ENCODE measurements at regions of chr12 and their contacts with region 1.

Region 1: GRCh38 chr12:66169221-66170170 is at the start of gene TMBIM4:
- DNase-seq: peak; percentile 67 to 88 (median 80)
- H3K4me3 ChIP-seq: peak within 1 kb of the TSS; percentile 59 to 94 (median 82)
- H3K27ac ChIP-seq: peak within 1 kb of the TSS; percentile 93 to 100 (median 99)
- H3K27me3 ChIP-seq: no peaks in the 10 kb centered on the region
- CTCF ChIP-seq: peak; percentile 21 to 72 (median 56)
- total RNA-seq, gene TMBIM4: 18.9 to 70.3 (median 40.0) TPM

Region 2: GRCh38 chr12:66066137-66066928 is 103.2 kb before region 1 on chr12:
- intact Hi-C with region 1: no loop called
- DNase-seq: no peak
- H3K4me3 ChIP-seq: no peak overlapping the region
- H3K27ac ChIP-seq: no peak overlapping the region
- H3K27me3 ChIP-seq: peaks cover 0 to 31% (median 3%) of the 10 kb centered on the region in 45 donors
- CTCF ChIP-seq: no peak

Region 3: GRCh38 chr12:66129954-66130276 is 39.6 kb before region 1 on chr12:
- intact Hi-C with region 1: loop called in 1 of 2 experiments (anchors 2 kb)
- DNase-seq: no peak
- H3K4me3 ChIP-seq: peak overlapping the region; percentile 64 to 99 (median 87)
- H3K27ac ChIP-seq: peak overlapping the region in 4 of 59 donors; percentile 55 to 78 (median 70)
- H3K27me3 ChIP-seq: no peaks in the 10 kb centered on the region
- CTCF ChIP-seq: no peak

Region 4: GRCh38 chr12:66144791-66145754 is 24.4 kb before region 1 on chr12:
- intact Hi-C with region 1: no loop called
- DNase-seq: no peak
- H3K4me3 ChIP-seq: peak overlapping the region in 1 of 59 donors; percentile 19
- H3K27ac ChIP-seq: peak overlapping the region in 26 of 59 donors; percentile 1 to 70 (median 20)
- H3K27me3 ChIP-seq: no peaks in the 10 kb centered on the region
- CTCF ChIP-seq: peak in 55 of 56 donors; percentile 24 to 72 (median 50)

Region 5: GRCh38 chr12:66301944-66302826 is 132.7 kb after region 1 on chr12 and contains the start of gene HELB:
- intact Hi-C with region 1: loop called in 1 of 2 experiments (anchors 10 kb)
- DNase-seq: peak; percentile 37 to 97 (median 93)
- H3K4me3 ChIP-seq: peak within 1 kb of the TSS; percentile 53 to 91 (median 79)
- H3K27ac ChIP-seq: peak within 1 kb of the TSS in 50 of 59 donors; percentile 16 to 87 (median 64)
- H3K27me3 ChIP-seq: no peaks in the 10 kb centered on the region
- CTCF ChIP-seq: peak in 5 of 56 donors; percentile 2 to 24 (median 9)
- total RNA-seq, gene HELB: 1.2 to 14.2 (median 3.5) TPM

Region 6: DNA sequence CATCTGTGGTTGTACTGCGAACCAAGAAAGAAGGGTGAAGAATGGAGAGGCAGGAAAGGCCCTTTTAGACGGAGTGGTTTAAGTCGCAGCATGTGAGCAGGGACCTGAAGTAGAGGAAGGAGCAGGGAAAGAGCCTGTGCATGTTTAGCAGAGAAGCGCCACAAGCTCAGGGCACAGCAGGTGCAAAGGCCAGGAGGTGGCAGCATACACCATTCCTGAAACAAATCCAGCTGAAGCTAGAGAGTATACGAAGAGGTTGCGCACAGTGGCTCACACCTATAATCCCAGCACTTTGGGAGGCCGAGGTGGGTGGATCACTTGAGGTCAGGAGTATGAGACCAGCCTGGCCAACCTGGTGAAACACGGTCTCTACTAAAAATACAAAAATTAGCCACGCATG is 182.7 kb after region 1 on chr12:
- intact Hi-C with region 1: no loop called
- DNase-seq: peak in 5 of 10 donors; percentile 16 to 43 (median 40)
- H3K4me3 ChIP-seq: no peak overlapping the region
- H3K27ac ChIP-seq: no peak overlapping the region
- H3K27me3 ChIP-seq: no peaks in the 10 kb centered on the region
- CTCF ChIP-seq: peak in 51 of 56 donors; percentile 14 to 65 (median 37)

Measured in dorsolateral prefrontal cortex (tissue), 120 donors.